ENCODE measurements at regions of chr10 and their contacts with region 1.

Region 1: GRCh38 chr10:117174439-117175214 is 22.7 kb upstream of the KCNK18 start:
- ATAC-seq: peak; percentile 77 to 90 (median 82)
- H3K4me3 ChIP-seq: peak overlapping the region; percentile 24 to 35 (median 30)
- H3K27ac ChIP-seq: no peak overlapping the region
- H3K4me1 ChIP-seq: peaks cover 0 to 4% of the 10 kb centered on the region in 2 donors

Region 2: GRCh38 chr10:116809483-116810119 is 365.0 kb before region 1 on chr10:
- in situ Hi-C with region 1: loop called in 4 of 9 experiments (anchors 10 to 25 kb)
- ATAC-seq: peak in 1 of 8 experiments; percentile 36
- H3K4me3 ChIP-seq: no peak overlapping the region
- H3K27ac ChIP-seq: no peak overlapping the region
- H3K4me1 ChIP-seq: no peaks in the 10 kb centered on the region

Region 3: DNA sequence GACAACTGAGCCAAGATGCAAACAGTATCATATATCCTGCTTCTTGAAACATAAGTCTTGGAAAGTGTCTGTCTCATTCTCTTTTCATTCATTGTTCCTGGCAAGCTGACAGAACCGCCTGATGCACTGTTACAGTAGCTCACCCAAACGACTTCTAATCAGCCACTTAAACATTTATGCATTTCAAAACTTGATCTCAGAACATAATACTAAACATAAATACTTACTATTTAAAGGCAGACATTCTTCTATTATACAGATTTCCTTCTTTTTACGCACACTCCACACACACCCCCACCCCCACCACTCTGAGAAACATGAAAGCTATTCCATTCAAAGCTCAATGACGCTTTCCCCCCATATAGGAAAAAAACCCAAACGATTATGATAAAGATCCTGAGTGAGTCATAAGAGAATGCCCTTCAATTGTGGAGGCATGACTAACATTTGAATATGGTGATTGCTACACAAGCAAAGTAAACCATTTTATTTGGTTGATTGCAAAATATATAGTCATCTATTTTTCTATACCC is 200.1 kb before region 1 on chr10:
- in situ Hi-C with region 1: loop called in 1 of 9 experiments (anchors 25 kb)
- ATAC-seq: peak; percentile 32 to 87 (median 67)
- H3K4me3 ChIP-seq: no peak overlapping the region
- H3K27ac ChIP-seq: no peak overlapping the region
- H3K4me1 ChIP-seq: peaks cover 18 to 46% of the 10 kb centered on the region in 2 donors

Measured in motor neuron (in vitro differentiated cells).